GM13976 (cell line): ENCODE measurements at regions of chr21 and their contacts with region 1.

Region 1: GRCh38 chr21:24895885-24896734 is 711.2 kb downstream of the MRPL39 start:
- DNase-seq: no peak
- CTCF ChIP-seq: peak; percentile 31

Region 2: GRCh38 chr21:25039461-25040380 is 143.6 kb after region 1 on chr21:
- in situ Hi-C with region 1: loop called (anchors 10 kb)
- DNase-seq: no peak
- CTCF ChIP-seq: peak; percentile 31

Region 3: DNA sequence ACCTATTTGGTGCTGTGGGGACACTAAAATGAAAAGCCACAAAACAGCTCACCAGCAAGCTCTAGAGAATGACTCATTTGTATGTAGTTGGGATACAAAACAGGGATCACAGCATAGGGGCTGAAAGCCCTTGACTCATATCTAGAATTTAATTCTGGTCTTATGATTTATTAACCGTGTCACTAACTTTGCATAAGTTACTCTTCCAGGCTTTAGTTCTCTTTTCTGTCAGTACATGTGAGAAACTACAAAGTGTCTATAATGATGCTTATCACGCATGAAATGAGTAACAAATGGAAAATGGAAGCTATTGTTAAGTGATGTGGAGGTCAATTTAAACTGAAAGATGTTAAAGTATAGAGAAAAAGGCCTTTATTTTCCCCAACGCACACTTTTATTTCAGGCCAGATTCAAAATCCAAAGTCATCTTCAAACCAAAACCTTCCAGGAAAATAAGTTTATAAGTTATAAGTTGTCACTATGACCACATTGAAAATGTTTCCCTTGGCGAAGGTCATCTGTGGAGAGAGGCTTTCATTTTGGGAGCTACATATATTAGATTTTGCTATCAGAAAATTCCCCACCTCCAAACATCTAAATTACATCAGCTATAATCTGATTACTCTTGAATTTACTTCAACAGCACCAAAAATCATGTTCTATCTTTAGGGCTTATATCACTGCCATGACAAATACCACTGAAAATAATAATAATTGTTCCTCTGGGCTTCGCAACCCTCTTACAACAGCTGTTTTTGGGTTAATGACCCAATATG is 280.7 kb after region 1 on chr21:
- in situ Hi-C with region 1: loop called (anchors 25 kb)
- DNase-seq: peak; percentile 25
- CTCF ChIP-seq: no peak

Region 4: GRCh38 chr21:25273959-25274358 is 377.8 kb after region 1 on chr21:
- in situ Hi-C with region 1: no loop called
- DNase-seq: no peak
- CTCF ChIP-seq: no peak

Region 5: GRCh38 chr21:25313829-25314228 is 417.7 kb after region 1 on chr21:
- in situ Hi-C with region 1: loop called (anchors 25 kb)
- DNase-seq: no peak
- CTCF ChIP-seq: no peak

Region 6: DNA sequence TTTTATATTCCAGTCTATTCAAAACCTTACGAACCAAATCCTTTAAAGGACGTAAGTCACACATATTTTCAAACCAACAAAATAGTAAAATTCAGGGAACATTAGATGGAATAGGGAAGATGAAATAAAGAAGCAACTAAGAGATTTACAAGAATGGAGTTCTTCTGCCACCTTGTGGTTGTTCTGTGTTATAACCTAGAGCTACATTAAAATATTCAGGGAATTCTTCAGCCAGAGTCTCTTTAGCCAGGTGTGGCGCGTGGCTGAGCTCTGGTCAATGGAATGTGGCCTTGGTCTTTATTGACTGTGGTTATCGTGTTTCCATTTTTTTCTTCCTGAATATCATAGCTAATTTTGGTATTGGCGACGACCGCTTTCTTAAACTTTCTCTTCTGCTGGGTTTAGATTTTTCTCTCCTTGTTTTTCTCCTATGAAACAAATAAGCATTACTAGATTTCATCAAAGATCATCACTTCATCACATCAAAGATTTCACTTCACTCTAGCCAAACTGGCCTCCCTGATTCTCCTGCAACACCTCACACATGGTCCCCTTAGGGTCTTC is 489.9 kb after region 1 on chr21:
- in situ Hi-C with region 1: loop called (anchors 25 kb)
- DNase-seq: peak; percentile 38
- CTCF ChIP-seq: peak; percentile 60